ENCODE measurements at regions of chr5 and their contacts with region 1.

Region 1: DNA sequence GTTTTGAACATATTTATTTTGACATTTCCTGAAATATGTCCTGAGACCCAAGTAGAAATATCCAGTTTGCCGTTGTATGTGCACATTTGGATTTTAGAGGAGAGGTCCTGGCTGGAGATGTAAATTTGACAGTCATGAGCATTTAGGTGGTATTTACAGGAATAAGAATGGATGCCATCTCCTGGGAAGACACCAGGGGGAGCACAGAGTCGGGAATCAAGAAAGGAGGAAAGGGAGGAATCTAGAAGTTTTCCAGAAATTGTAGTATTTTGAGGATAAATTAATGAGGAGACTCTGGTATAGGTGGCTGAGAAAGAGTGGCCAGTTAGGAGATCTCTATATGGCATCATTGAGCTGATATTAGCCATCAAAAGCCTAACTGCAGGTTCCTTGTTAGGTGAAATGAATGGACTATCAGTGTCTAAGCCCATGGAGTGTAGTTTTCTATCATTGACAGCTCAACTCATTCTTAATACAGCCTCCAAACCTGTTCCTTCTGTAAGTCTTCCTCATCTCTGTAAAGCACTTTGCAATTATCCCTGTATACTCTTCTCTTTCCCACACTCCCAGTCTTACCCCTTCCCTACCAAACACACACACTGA is 7.2 kb downstream of the GAPT start:
- DNase-seq: no peak
- ATAC-seq: peak; percentile 49

Region 2: DNA sequence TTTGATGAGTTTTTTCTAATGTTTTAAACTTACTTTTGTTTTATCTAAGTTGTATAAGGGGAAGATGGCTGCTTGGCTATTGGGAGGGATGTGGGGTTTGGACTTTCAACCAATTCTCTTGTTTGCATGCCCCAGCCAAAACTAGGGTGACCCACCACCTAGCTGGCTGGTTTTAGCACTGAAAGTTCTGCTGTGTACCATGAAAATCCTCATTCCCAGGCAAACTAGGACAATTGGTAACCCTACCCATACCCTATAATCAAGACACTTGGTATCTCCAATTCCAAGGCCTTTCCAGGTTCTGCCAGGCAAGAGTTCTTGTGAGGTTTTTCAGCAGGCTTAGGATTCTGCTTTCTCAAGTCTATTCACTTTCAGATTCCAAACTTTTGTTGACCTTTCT is 97.5 kb after region 1 on chr5:
- intact Hi-C with region 1: no loop called
- DNase-seq: no peak
- ATAC-seq: no peak

Region 3: GRCh38 chr5:58717303-58718007 is 219.0 kb after region 1 on chr5:
- intact Hi-C with region 1: loop called (anchors 10 kb)
- DNase-seq: no peak
- ATAC-seq: no peak

Region 4: DNA sequence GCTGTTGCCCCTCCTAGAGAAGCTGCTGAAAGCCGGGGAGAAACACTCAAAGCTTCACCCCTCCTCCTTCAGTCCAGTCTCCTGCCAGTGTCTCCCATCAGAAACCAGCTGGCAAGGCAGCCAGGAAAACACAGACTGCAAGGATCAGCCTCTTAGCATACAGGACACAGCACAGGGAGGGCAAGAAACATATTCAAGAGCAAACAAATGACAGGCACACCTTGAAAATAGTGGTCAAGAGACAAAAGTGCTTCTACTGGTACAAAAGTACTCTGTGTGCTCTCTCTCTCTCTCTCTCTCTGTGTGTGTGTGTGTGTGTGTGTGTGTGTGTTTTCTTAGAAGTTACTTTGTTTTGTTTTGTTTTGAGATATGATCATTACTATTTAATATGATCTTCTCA is 311.6 kb after region 1 on chr5:
- intact Hi-C with region 1: loop called (anchors 5 kb)
- DNase-seq: no peak
- ATAC-seq: no peak

Region 5: DNA sequence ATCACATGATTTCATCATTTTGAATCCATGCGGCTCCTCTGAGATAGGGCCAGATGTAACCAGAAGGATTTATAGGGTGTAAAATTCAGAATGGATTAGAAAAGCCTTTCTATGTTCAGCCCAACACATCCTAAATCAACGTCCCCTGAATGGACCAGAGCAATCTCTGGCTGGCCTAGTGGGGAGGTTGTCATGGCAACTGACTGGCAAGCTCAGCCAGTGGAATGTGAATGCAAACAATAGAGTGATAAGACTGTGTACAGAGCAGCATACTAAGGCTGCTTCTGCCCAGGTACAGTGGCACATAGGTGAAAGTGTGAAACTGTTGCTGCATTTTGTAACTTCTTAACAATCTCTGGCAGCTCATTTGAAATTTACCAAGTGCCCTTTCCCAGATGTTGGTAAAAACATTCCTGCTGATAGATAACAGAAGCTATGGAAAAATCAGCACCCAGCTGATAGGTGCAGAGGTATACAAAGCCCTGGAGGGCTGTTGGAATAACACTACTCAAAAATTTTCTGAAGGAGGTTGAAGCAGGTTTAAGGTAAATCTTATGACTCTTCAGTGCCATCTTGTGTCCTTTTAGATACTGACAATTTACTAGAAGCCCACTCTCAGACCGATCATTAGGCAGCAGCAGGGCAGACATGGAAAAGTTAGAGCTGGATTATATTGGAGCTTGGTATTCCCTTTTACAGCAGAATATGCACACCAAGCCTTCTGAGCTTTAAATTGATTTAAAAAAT is 351.7 kb after region 1 on chr5:
- intact Hi-C with region 1: loop called (anchors 5 kb)
- DNase-seq: no peak
- ATAC-seq: peak; percentile 52